Right lobe of liver (tissue), 6 donors: ENCODE measurements at regions of chrX and their contacts with region 1.

Region 1: DNA sequence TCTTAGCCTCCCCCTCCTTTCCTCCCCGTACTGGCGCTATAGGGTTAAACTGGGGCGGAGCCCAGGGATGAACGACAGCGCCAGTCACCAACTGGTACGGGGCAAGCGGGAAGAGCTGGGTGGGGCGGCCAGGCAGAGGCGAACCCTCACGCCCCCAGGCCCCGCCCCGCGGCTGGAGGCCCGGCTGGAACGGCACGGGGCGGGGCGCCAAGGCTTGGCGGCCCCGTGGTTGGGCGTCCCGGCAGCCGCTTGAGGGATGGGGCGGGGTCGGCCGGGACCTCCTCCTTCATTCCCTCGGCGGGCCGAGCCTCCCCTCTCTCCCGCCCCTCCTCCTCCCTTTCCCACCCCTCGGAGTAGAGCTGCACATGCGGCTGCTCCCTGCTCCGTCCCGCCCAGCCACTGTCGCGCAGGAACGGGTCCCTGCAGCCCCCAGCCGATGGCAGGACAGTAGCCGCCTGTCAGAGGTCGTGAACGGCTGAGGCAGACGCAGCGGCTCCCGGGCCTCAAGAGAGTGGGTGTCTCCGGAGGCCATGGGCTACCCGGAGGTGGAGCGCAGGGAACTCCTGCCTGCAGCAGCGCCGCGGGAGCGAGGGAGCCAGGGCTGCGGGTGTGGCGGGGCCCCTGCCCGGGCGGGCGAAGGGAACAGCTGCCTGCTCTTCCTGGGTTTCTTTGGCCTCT is at the start of gene EDA:
- DNase-seq: peak; percentile 84 to 89 (median 86)
- ATAC-seq: peak; percentile 94 to 98 (median 98)
- H3K4me3 ChIP-seq: peak within 1 kb of the TSS; percentile 43 to 59 (median 43)
- H3K27ac ChIP-seq: no peak within 1 kb of the TSS
- H3K4me1 ChIP-seq: no peaks in the 10 kb centered on the region
- H3K27me3 ChIP-seq: peaks cover 0 to 3% of the 10 kb centered on the region in 2 donors
- CTCF ChIP-seq: no peak
- POLR2A ChIP-seq: no peak
- total RNA-seq, gene EDA: 1.7 to 2.7 (median 2.1) TPM

Region 2: GRCh38 chrX:69210581-69210980 is 405.3 kb before region 1 on chrX:
- intact Hi-C with region 1: no loop called
- DNase-seq: no peak
- ATAC-seq: no peak
- H3K4me3 ChIP-seq: no peak overlapping the region
- H3K27ac ChIP-seq: no peak overlapping the region
- H3K4me1 ChIP-seq: no peaks in the 10 kb centered on the region
- H3K27me3 ChIP-seq: no peaks in the 10 kb centered on the region
- CTCF ChIP-seq: no peak
- POLR2A ChIP-seq: no peak

Region 3: GRCh38 chrX:69538321-69538876 is 77.5 kb before region 1 on chrX:
- intact Hi-C with region 1: loop called in 1 of 2 experiments (anchors 5 kb)
- DNase-seq: peak; percentile 77 to 80 (median 78)
- ATAC-seq: peak; percentile 95 to 100 (median 98)
- H3K4me3 ChIP-seq: peak overlapping the region; percentile 25 to 42 (median 31)
- H3K27ac ChIP-seq: no peak overlapping the region
- H3K4me1 ChIP-seq: no peaks in the 10 kb centered on the region
- H3K27me3 ChIP-seq: no peaks in the 10 kb centered on the region
- CTCF ChIP-seq: peak; percentile 69 to 83 (median 74)
- POLR2A ChIP-seq: no peak

Region 4: DNA sequence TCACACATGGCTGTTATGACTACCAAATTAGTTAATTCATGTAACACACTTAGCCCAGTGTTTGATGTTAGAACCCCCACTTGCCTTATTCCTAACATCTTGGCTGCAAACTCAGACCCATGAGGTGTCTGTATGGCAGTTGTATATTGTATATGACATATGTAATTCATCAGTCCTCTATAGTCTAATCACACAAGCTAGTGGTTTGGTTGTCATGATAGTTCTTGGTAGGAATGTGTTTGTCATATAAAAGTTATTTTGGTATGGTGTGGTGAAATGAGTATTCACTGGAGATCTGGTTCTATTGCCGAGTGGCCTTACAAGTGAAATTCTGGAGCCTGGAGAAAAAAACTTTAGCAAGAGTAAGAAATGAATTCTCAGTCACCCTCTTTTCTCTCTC is 284.6 kb after region 1 on chrX:
- intact Hi-C with region 1: no loop called
- DNase-seq: no peak
- ATAC-seq: no peak
- H3K4me3 ChIP-seq: no peak overlapping the region
- H3K27ac ChIP-seq: no peak overlapping the region
- H3K4me1 ChIP-seq: no peaks in the 10 kb centered on the region
- H3K27me3 ChIP-seq: no peaks in the 10 kb centered on the region
- CTCF ChIP-seq: no peak
- POLR2A ChIP-seq: no peak